ENCODE measurements at regions of chr1 and their contacts with region 1.

Region 1: GRCh38 chr1:209685821-209686220 is 10.6 kb downstream of the G0S2 start:
- DNase-seq: peak; percentile 67
- H3K4me3 Mint-ChIP-seq: peak overlapping the region; percentile 73
- H3K27ac Mint-ChIP-seq: peak overlapping the region; percentile 78
- H3K4me1 Mint-ChIP-seq: peaks cover 42% of the 10 kb centered on the region
- H3K27me3 Mint-ChIP-seq: peaks cover 2% of the 10 kb centered on the region

Region 2: DNA sequence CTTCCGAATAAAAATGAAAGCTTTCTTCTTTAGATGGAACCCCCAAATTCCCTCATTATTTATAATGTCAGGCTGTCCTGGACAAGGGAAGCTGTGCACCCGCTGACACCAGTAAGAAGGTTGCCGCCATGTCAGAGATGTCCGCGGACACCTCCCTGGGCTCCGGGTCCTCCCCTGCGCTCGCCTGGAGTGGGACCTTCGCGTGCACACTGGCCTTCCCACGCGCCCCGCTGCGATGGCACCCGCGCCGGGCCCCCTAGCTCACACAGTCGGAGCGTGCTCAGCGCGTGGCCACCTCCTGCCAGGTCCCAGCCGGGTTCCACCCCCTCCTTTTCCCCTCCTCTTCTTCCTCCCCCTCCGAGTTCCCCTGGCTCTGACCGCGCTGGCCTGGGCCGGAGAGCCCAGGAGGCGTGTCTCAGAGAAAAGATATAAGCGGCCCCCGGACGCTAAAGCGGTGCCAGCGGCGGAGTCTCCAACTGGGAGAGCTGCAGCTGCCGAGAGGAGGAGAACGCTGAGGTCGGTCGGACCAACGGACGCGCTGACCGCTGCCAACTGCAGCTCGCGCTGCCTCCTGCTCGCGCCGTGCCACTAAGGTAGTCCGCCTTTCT is 10.8 kb before region 1 on chr1 and contains the start of gene G0S2:
- CTCF ChIA-PET with region 1: interaction called, 6 read pairs
- POLR2A ChIA-PET with region 1: interaction called, 10 read pairs
- DNase-seq: peak; percentile 50
- H3K4me3 Mint-ChIP-seq: peak within 1 kb of the TSS; percentile 65
- H3K27ac Mint-ChIP-seq: peak within 1 kb of the TSS; percentile 80
- H3K4me1 Mint-ChIP-seq: peaks cover 73% of the 10 kb centered on the region
- H3K27me3 Mint-ChIP-seq: peaks cover 28% of the 10 kb centered on the region
- total RNA-seq, gene G0S2: 7.3 to 7.6 TPM

Region 3: GRCh38 chr1:209704584-209704983 is 18.8 kb after region 1 on chr1 and contains the start of gene HSD11B1:
- CTCF ChIA-PET with region 1: no interaction called
- POLR2A ChIA-PET with region 1: no interaction called
- DNase-seq: no peak
- H3K4me3 Mint-ChIP-seq: no peak within 1 kb of the TSS
- H3K27ac Mint-ChIP-seq: peak within 1 kb of the TSS; percentile 11
- H3K4me1 Mint-ChIP-seq: peaks cover 61% of the 10 kb centered on the region
- H3K27me3 Mint-ChIP-seq: peaks cover 2% of the 10 kb centered on the region
- total RNA-seq, gene HSD11B1: 8.7 to 11.4 TPM

Region 4: GRCh38 chr1:209741889-209742288 is 56.1 kb after region 1 on chr1:
- CTCF ChIA-PET with region 1: no interaction called
- POLR2A ChIA-PET with region 1: no interaction called
- DNase-seq: no peak
- H3K4me3 Mint-ChIP-seq: no peak overlapping the region
- H3K27ac Mint-ChIP-seq: peak overlapping the region; percentile 1
- H3K4me1 Mint-ChIP-seq: peaks cover 41% of the 10 kb centered on the region
- H3K27me3 Mint-ChIP-seq: no peaks in the 10 kb centered on the region